ENCODE measurements at regions of chr17 and their contacts with region 1.

Region 1: DNA sequence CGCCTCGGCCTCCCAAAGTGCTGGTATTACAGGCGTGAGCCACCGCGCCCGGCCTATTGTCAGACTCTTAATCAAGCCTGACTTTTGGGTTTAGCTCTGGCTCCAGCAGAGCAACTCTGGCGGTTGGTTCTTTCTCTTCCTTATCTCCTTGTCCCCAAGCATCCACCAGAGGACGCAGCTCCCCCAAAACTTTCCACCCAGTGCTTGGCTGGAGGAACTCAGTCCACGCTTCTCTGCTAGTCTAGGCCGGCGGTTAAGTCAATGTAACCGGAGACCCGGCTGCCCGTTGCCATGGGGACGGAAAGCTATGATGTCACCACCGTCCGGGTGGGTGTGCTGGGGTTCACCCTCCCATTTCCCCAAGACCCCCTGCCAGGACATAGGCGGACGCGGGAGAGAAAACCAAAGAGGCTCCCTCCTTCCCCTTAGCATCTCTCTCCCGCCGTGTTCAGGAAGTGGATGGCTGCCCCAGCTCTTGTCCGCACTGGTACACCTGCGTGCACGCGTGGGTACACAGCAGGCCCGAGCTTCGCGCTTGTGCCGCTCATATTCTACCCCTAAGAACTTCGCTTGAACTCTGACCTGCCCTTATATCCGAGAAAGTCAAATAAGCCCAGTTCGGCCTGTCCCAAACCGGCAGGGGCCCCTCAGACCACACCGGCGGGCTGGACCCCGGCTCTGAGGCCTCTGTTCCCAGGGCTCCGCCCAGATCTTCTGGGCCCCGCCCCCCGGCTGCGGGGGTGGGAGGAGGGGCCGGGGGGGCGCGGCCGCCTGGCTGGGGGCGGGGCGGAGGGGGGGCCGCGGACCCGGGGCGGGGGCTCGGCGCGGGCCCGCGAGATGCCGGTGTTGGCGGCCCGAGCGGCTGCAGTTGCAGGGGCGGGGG is at the start of gene RND2:
- DNase-seq: peak; percentile 97
- H3K4me3 ChIP-seq: peak within 1 kb of the TSS; percentile 37 to 63 (median 54)
- H3K27ac ChIP-seq: peak within 1 kb of the TSS; percentile 79 to 86 (median 81)
- H3K4me1 ChIP-seq: peaks cover 0 to 33% (median 23%) of the 10 kb centered on the region in 4 donors
- H3K27me3 ChIP-seq: no peaks in the 10 kb centered on the region
- CTCF ChIP-seq: peak; percentile 58 to 86 (median 76)
- EP300 ChIP-seq: no peak
- POLR2A ChIP-seq: peak in 1 of 2 donors; percentile 7
- total RNA-seq, gene RND2: 2.5 to 4.6 (median 2.8) TPM

Region 2: DNA sequence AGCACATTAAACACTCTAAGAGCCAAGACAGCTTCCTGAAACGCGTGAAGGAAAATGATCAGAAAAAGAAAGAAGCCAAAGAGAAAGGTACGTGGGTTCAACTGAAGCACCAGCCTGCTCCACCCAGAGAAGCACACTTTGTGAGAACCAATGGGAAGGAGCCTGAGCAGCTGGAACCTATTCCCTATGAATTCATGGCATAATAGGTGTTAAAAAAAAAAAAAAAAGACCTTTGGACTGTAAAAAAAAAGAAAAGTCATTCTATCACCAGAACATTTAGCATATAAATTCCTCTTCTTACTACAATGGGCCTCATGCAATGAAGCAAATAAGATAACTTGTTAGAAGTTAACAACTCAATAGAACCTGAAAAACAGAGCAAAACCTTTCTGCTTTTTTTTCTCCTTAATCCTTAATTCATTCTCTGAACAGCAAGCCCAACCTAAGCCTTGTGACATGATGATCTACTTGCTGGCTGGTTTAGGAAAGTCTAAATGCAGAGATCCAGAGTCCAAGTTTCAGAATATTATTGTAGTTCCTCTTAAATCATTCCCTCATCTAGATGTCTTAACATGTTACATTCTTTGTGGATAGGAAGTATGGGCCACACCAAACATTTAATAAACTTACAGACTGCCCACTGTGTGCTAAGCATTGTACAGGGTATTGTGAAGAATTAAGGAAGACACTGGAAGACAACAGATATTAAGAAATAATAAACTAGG is 55.1 kb after region 1 on chr17:
- intact Hi-C with region 1: loop called (anchors 5 kb)
- DNase-seq: no peak
- H3K4me3 ChIP-seq: no peak overlapping the region
- H3K27ac ChIP-seq: no peak overlapping the region
- H3K4me1 ChIP-seq: no peaks in the 10 kb centered on the region
- H3K27me3 ChIP-seq: no peaks in the 10 kb centered on the region
- CTCF ChIP-seq: no peak
- EP300 ChIP-seq: no peak
- POLR2A ChIP-seq: no peak

Region 3: GRCh38 chr17:43125133-43125966 is 100.7 kb after region 1 on chr17 and contains the start of gene BRCA1:
- intact Hi-C with region 1: loop called (anchors 5 kb)
- DNase-seq: peak; percentile 97
- H3K4me3 ChIP-seq: peak within 1 kb of the TSS; percentile 53 to 77 (median 68)
- H3K27ac ChIP-seq: peak within 1 kb of the TSS; percentile 80 to 87 (median 84)
- H3K4me1 ChIP-seq: peaks cover 0 to 24% (median 20%) of the 10 kb centered on the region in 4 donors
- H3K27me3 ChIP-seq: no peaks in the 10 kb centered on the region
- CTCF ChIP-seq: no peak
- EP300 ChIP-seq: no peak
- POLR2A ChIP-seq: peak; percentile 15 to 31
- total RNA-seq, gene BRCA1: 5.4 to 10.2 (median 6.1) TPM

Region 4: GRCh38 chr17:43170766-43171585 is 146.3 kb after region 1 on chr17 and contains the start of gene NBR1:
- intact Hi-C with region 1: loop called (anchors 1 kb)
- DNase-seq: peak; percentile 98
- H3K4me3 ChIP-seq: peak within 1 kb of the TSS; percentile 77 to 91 (median 80)
- H3K27ac ChIP-seq: peak within 1 kb of the TSS; percentile 95 to 98 (median 98)
- H3K4me1 ChIP-seq: peaks cover 0 to 57% (median 54%) of the 10 kb centered on the region in 4 donors
- H3K27me3 ChIP-seq: no peaks in the 10 kb centered on the region
- CTCF ChIP-seq: no peak
- EP300 ChIP-seq: no peak
- POLR2A ChIP-seq: peak; percentile 72 to 80
- total RNA-seq, gene NBR1: 77.5 to 98.1 (median 81.5) TPM

Region 5: DNA sequence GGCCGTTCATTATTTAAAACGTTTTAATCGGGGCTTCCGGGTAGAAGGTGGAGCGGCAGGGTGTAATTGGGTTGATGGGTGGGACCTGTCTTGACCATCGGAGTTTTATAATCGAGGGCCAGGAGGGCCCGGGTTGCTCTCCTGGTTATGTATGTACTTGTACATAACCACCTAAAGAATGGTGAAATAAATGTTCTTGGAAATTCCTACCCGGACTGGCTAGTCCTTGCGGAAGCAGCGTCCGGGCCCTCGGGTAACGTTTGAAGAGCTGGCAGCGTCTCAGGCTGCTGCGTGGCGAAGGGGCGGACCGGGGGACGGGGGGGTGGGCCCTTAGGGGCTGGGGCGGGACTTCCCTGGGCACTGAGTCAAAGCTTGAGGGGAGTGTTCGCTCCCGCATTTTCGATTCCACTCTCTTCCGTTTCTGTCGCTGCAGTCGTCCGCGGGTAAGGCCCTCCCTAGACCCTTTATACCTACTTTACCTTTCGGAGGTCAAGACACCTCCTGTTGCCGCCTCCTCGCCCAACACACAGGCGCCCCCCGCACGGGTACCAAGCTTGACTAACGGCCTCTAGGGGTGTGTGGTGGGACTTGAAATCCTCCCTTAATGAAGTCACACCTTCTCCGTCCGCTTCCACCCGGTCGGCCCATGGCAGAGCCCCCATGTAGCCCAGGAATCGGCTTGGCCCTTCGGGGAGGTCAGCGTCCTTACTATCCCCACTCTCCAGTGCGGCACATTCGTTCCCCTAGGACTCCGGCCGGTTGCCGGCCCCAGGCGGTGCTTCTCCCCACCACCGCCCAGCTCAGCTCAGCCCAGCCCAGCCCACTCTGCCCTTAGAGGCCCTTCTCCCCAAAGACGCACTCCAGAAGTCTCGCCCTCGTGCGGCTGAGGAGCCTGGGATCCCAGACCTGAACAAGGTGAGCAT is 187.1 kb after region 1 on chr17 and contains the start of gene TMEM106A:
- intact Hi-C with region 1: loop called (anchors 5 kb)
- DNase-seq: peak; percentile 93
- H3K4me3 ChIP-seq: peak within 1 kb of the TSS; percentile 51 to 71 (median 68)
- H3K27ac ChIP-seq: peak within 1 kb of the TSS; percentile 80 to 87 (median 84)
- H3K4me1 ChIP-seq: peaks cover 0 to 23% (median 20%) of the 10 kb centered on the region in 4 donors
- H3K27me3 ChIP-seq: no peaks in the 10 kb centered on the region
- CTCF ChIP-seq: peak; percentile 12 to 51 (median 40)
- EP300 ChIP-seq: no peak
- POLR2A ChIP-seq: peak in 1 of 2 donors; percentile 8
- total RNA-seq, gene TMEM106A: 3.0 to 7.2 (median 4.7) TPM

Region 6: DNA sequence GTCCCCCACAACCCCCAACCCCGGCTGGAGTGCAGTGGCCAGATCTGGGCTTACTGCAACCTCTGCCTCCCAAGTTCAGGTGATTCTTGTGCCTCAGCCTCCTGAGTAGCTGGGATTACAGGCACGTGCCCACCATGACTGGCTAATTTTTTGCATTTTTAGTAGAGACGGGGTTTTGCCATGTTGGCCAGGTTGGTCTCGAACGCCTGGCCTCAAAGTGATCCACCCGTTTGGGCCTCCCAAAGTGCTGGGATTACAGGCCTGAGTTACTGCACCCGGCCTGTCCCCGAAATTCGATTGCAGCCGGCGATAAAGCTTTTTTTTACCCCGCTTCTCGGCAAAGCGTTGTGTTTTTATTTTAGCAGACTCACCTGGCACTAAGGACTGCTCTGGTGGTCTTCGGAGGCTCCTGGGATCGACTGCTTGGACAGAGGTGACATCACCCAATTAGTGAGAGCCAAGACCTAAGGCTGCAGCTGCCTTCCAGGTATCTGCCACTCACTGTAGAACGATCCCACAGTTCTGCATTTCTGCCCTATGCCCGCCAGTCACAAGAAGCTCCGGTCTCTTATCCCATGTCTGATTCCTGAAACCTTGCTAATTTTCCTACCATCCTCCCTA is 292.0 kb after region 1 on chr17:
- intact Hi-C with region 1: loop called (anchors 5 kb)
- DNase-seq: no peak
- H3K4me3 ChIP-seq: no peak overlapping the region
- H3K27ac ChIP-seq: no peak overlapping the region
- H3K4me1 ChIP-seq: no peaks in the 10 kb centered on the region
- H3K27me3 ChIP-seq: no peaks in the 10 kb centered on the region
- CTCF ChIP-seq: no peak
- EP300 ChIP-seq: no peak
- POLR2A ChIP-seq: no peak